ENCODE measurements at regions of chr15 and their contacts with region 1.

Region 1: GRCh38 chr15:91302588-91303439 is 202.8 kb downstream of the SV2B start:
- DNase-seq: peak; percentile 29
- ATAC-seq: peak; percentile 60
- H3K4me3 Mint-ChIP-seq: no peak overlapping the region
- H3K27ac Mint-ChIP-seq: no peak overlapping the region
- H3K4me1 Mint-ChIP-seq: peaks cover 8% of the 10 kb centered on the region
- H3K27me3 Mint-ChIP-seq: peaks cover 6% of the 10 kb centered on the region

Region 2: DNA sequence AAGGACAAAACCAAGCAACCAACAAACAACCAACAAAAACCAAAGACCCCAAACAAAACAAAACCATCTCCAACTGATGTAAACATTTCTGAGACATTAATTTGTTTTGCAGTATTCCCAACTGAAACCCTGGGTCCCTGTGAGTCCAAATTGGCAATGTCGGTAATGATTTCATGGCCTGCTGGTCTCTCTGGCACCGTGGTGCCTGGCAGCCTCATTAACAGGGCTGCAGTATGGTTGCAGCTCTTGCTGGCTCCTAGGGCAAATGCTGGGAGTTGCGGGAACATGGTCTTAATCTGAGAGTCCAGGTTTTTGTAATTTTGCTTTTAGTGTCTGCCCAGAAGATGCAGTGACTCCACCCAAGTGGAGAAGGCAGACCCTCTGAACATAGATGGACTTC is 74.4 kb before region 1 on chr15:
- CTCF ChIA-PET with region 1: no interaction called
- POLR2A ChIA-PET with region 1: no interaction called
- intact Hi-C with region 1: no loop called
- DNase-seq: no peak
- ATAC-seq: no peak
- H3K4me3 Mint-ChIP-seq: no peak overlapping the region
- H3K27ac Mint-ChIP-seq: no peak overlapping the region
- H3K4me1 Mint-ChIP-seq: no peaks in the 10 kb centered on the region
- H3K27me3 Mint-ChIP-seq: peaks cover 23% of the 10 kb centered on the region

Region 3: GRCh38 chr15:91318931-91319330 is 16.1 kb after region 1 on chr15:
- CTCF ChIA-PET with region 1: interaction called, 12 read pairs
- POLR2A ChIA-PET with region 1: no interaction called
- intact Hi-C with region 1: no loop called
- DNase-seq: no peak
- ATAC-seq: no peak
- H3K4me3 Mint-ChIP-seq: no peak overlapping the region
- H3K27ac Mint-ChIP-seq: no peak overlapping the region
- H3K4me1 Mint-ChIP-seq: peaks cover 26% of the 10 kb centered on the region
- H3K27me3 Mint-ChIP-seq: no peaks in the 10 kb centered on the region

Region 4: GRCh38 chr15:91589356-91589755 is 286.5 kb after region 1 on chr15:
- CTCF ChIA-PET with region 1: no interaction called
- POLR2A ChIA-PET with region 1: no interaction called
- intact Hi-C with region 1: loop called in 1 of 2 experiments (anchors 5 kb)
- DNase-seq: peak; percentile 22
- ATAC-seq: peak; percentile 61
- H3K4me3 Mint-ChIP-seq: no peak overlapping the region
- H3K27ac Mint-ChIP-seq: no peak overlapping the region
- H3K4me1 Mint-ChIP-seq: no peaks in the 10 kb centered on the region
- H3K27me3 Mint-ChIP-seq: peaks cover 8% of the 10 kb centered on the region

Region 5: DNA sequence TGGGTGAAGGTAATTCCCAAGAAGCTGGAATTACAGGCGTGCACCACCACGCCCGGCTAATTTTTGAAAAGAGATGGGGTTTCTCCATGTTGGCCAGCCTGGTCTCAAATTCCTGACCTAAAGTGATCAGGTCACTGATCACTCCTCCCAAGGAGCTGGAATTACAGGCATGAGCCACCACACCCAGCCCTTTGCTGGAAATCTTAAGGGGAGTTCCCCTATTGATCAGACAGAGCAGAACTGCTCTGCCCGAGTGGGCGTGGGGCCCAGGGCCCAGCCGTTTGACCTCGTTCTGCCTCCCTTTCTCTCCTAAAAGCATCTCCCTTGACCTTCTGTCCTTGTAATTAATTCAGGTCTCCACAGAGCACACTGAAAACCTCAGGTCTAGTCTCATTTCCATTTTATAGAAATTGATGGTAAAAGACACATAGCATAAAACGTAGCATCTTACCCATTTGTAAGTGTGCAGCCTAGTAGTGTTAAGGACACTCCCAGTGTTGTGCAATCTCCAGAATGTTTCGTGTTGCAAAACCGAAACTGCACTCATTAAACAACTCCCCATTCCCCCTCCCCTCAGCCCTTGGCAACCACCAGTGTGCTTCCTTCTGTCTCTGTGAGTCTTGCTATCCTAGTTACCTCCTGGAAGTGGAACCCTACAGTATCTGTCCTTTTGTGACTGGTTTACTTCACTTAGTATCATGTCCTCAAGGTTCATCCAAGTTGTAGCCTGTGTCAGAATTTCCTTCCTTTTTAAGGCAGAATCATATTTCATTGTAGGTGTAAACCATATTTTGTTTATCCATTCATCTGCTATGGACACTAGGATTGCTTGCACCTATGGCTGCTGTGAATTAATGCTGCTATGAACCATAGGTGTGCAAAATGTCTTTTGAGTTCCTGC is 640.1 kb after region 1 on chr15:
- CTCF ChIA-PET with region 1: interaction called, 6 read pairs
- POLR2A ChIA-PET with region 1: no interaction called
- intact Hi-C with region 1: loop called in 1 of 2 experiments (anchors 5 kb)
- DNase-seq: peak; percentile 63
- ATAC-seq: peak; percentile 65
- H3K4me3 Mint-ChIP-seq: no peak overlapping the region
- H3K27ac Mint-ChIP-seq: peak overlapping the region; percentile 32
- H3K4me1 Mint-ChIP-seq: peaks cover 48% of the 10 kb centered on the region
- H3K27me3 Mint-ChIP-seq: no peaks in the 10 kb centered on the region

Region 6: GRCh38 chr15:92714477-92715401 is 1411.9 kb after region 1 on chr15:
- CTCF ChIA-PET with region 1: no interaction called
- POLR2A ChIA-PET with region 1: no interaction called
- intact Hi-C with region 1: loop called in 1 of 2 experiments (anchors 10 kb)
- DNase-seq: peak; percentile 85
- ATAC-seq: peak; percentile 86
- H3K4me3 Mint-ChIP-seq: peak overlapping the region; percentile 53
- H3K27ac Mint-ChIP-seq: no peak overlapping the region
- H3K4me1 Mint-ChIP-seq: peaks cover 5% of the 10 kb centered on the region
- H3K27me3 Mint-ChIP-seq: peaks cover 15% of the 10 kb centered on the region